ENCODE measurements at regions of chr1 and their contacts with region 1.

Region 1: GRCh38 chr1:12619792-12620487 is 1.9 kb upstream of the DHRS3 start:
- DNase-seq: peak; percentile 77 to 94 (median 86)

Region 2: GRCh38 chr1:12316331-12316730 is 303.6 kb before region 1 on chr1:
- intact Hi-C with region 1: loop called (anchors 5 kb)
- DNase-seq: no peak

Region 3: DNA sequence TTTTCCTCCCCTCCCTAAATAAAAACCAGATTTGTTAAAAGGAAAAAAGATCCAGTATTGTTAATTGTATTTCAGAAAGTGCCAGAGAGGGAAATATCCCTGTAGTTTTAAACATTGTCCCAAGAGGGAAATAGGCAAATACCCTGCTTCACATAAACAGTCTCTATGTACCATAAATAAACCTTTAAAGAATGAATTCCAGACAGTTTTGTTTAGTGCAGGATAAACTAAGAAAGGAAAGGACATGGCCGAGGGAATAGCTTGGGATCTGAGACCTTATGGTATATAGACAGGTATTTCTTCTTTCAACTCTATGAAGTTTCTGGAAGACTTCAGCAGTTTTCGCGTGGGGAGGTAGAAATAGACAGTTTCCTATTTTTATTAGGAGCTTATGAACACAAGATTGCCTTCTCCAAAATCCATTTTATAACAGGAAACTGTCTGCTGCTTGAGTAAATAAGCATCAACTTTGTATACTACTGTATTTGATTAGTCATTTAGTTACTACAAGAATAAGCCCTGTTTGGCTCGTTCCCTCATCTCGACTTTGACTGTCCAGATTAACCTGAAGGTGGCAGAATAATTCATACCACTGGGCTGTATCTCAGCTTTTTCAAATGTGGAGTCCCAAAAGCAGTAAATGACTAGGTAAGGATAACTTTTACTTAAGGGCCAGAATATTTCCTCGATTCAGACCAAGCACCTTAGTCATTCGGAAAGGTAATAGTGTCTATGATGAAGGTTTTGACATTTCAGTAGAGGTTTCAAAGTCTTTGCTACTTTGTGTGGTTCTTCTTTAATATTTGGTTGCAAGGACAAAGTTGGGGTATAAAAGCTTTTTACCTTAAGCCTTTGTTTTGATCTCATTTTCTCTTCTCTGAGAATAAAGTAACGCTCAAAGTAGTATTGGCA is 212.6 kb before region 1 on chr1:
- intact Hi-C with region 1: loop called (anchors 5 kb)
- DNase-seq: peak in 1 of 42 donors; percentile 18

Region 4: DNA sequence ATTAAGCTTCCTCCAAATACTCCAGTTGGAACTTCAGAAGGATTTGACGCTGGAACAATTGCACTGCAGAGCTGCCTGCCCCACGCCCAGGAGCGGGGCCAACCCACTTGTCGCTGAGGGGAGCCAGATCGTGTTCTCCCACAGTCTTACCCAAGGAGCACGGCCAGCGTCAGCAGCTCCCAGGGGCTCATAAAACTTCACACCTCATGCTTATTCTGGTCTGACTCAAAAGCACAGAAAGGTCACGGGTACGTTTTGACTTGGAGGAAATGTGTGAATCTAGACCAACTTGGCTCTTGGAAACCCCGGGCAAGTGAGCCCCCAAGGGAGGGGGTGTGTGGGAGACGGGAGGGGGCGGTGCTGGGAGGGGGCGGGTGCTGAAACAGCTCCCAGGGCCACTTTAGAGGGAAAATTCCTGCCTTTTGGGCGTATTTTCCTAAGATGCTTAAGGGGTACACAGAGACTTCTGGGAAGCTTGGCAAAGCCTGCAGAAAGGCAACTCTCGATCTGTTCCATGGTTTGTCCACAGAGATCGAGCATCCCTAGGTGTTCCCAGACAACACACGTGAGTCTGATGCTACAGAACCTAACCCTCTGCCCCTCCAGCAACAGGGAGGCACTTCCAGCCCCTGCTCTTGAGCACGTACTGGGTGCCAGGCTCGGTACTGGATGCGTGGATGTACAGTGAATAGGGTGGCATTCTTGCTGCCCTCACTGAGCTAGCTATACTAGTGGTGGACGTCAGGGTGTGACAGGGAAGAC is 100.8 kb before region 1 on chr1:
- intact Hi-C with region 1: loop called (anchors 10 kb)
- DNase-seq: peak in 25 of 42 donors; percentile 27 to 70 (median 50)

Region 5: GRCh38 chr1:12714726-12715500 is 95.0 kb after region 1 on chr1:
- intact Hi-C with region 1: no loop called
- DNase-seq: no peak

Region 6: DNA sequence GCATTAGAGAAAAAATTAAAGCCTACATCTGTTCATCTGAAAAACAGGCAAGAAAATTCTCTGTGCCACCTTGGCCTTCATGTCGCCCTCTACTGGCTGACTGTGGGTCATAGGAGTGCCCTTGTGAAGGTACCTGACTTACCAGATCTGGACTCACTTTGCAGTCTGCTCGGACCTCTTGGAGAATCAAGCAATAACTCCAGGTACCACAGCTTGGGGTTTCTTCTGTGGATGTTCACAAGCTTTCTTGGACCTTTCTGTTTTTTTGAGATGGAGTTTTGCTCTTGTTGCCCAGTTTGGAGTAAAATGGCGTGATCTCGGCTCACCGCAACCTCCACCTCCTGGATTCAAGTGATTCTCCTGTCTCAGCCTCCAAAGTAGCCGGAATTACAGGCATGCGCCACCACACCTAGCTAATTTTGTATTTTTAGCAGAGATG is 608.4 kb after region 1 on chr1:
- intact Hi-C with region 1: no loop called
- DNase-seq: peak in 19 of 42 donors; percentile 6 to 71 (median 31)